ENCODE measurements at regions of chr9 and their contacts with region 1.

Region 1: GRCh38 chr9:99405359-99405758 is 183.3 kb downstream of the SEC61B start:
- DNase-seq: no peak

Region 2: GRCh38 chr9:99235926-99236634 is 169.3 kb before region 1 on chr9:
- intact Hi-C with region 1: loop called in 1 of 2 experiments (anchors 5 kb)
- DNase-seq: no peak

Region 3: GRCh38 chr9:99666571-99666970 is 261.2 kb after region 1 on chr9:
- intact Hi-C with region 1: no loop called
- DNase-seq: no peak

Measured in posterior vena cava (tissue), 2 donors.